Calu3 (cell line): ENCODE measurements at regions of chr6 and their contacts with region 1.

Region 1: DNA sequence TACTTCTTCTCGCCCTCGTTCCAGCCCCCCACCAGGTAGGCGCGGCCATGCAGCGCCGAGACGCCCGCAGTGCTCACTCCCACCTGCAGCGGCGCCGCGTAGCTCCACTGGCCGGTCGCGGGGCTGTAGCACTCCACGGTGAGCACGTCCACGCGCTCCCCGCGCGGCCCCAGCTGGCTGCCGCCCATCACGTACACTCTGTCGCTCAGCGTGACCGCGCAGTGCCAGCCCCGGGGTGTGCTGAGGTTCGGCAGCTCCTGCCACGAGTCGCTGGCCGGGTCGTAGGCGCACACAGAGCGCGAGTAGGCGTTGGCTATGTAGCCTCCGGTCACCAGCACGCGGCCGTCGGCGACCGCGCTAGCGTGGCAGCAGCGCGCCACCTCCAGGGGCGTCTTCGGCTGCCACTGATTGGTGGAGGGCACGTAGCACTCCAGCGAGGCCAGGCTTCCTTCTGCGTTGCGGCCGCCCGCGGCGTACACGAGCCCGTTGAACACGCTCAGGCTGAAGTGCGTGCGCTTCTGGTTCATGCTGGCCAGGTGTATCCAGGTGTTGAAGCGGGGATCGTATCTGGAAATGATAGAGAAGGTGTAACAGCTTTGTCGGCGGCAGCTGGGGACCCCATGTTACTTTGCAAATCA is 13.7 kb downstream of the KLHL31 start:
- DNase-seq: peak; percentile 89
- H3K4me3 Mint-ChIP-seq: peak overlapping the region; percentile 100
- H3K27ac Mint-ChIP-seq: peak overlapping the region; percentile 95
- H3K4me1 Mint-ChIP-seq: peaks cover 23% of the 10 kb centered on the region
- H3K27me3 Mint-ChIP-seq: no peaks in the 10 kb centered on the region
- CTCF ChIP-seq: no peak

Region 2: DNA sequence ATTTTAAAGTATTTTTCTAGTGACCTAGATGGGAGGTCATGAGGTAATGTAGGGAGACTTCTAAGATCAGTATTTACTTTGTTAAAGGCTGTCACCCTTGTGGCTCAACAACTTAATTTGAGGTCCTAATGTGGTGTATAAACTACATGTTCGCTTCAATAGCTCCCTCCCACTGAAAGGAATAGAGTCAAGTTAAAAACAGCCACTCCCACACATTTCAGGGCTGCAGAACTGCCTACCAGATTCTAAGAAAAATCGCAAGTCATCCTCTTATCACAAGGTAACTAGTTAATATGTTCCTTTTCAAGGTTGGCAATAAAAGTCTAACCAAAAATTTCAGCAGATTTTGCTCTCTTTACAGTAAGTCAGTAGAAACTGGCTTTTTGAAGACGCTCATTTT is 863.4 kb before region 1 on chr6:
- CTCF ChIA-PET with region 1: no interaction called
- intact Hi-C with region 1: no loop called
- DNase-seq: no peak
- H3K4me3 Mint-ChIP-seq: no peak overlapping the region
- H3K27ac Mint-ChIP-seq: no peak overlapping the region
- H3K4me1 Mint-ChIP-seq: no peaks in the 10 kb centered on the region
- H3K27me3 Mint-ChIP-seq: peaks cover 46% of the 10 kb centered on the region
- CTCF ChIP-seq: no peak

Region 3: GRCh38 chr6:53513519-53513966 is 138.3 kb before region 1 on chr6:
- CTCF ChIA-PET with region 1: interaction called, 12 read pairs
- intact Hi-C with region 1: loop called (anchors 2 kb)
- DNase-seq: no peak
- H3K4me3 Mint-ChIP-seq: peak overlapping the region; percentile 39
- H3K27ac Mint-ChIP-seq: peak overlapping the region; percentile 23
- H3K4me1 Mint-ChIP-seq: peaks cover 68% of the 10 kb centered on the region
- H3K27me3 Mint-ChIP-seq: no peaks in the 10 kb centered on the region
- CTCF ChIP-seq: no peak

Region 4: GRCh38 chr6:53603386-53604116 is 48.3 kb before region 1 on chr6:
- CTCF ChIA-PET with region 1: no interaction called
- intact Hi-C with region 1: loop called (anchors 5 kb)
- DNase-seq: no peak
- H3K4me3 Mint-ChIP-seq: no peak overlapping the region
- H3K27ac Mint-ChIP-seq: no peak overlapping the region
- H3K4me1 Mint-ChIP-seq: peaks cover 23% of the 10 kb centered on the region
- H3K27me3 Mint-ChIP-seq: no peaks in the 10 kb centered on the region
- CTCF ChIP-seq: no peak

Region 5: GRCh38 chr6:53725791-53726431 is 74.0 kb after region 1 on chr6:
- CTCF ChIA-PET with region 1: interaction called, 5 read pairs
- intact Hi-C with region 1: loop called (anchors 5 kb)
- DNase-seq: peak; percentile 83
- H3K4me3 Mint-ChIP-seq: peak overlapping the region; percentile 47
- H3K27ac Mint-ChIP-seq: peak overlapping the region; percentile 54
- H3K4me1 Mint-ChIP-seq: peaks cover 38% of the 10 kb centered on the region
- H3K27me3 Mint-ChIP-seq: no peaks in the 10 kb centered on the region
- CTCF ChIP-seq: peak; percentile 92